ENCODE measurements at regions of chr4 and their contacts with region 1.

Region 1: DNA sequence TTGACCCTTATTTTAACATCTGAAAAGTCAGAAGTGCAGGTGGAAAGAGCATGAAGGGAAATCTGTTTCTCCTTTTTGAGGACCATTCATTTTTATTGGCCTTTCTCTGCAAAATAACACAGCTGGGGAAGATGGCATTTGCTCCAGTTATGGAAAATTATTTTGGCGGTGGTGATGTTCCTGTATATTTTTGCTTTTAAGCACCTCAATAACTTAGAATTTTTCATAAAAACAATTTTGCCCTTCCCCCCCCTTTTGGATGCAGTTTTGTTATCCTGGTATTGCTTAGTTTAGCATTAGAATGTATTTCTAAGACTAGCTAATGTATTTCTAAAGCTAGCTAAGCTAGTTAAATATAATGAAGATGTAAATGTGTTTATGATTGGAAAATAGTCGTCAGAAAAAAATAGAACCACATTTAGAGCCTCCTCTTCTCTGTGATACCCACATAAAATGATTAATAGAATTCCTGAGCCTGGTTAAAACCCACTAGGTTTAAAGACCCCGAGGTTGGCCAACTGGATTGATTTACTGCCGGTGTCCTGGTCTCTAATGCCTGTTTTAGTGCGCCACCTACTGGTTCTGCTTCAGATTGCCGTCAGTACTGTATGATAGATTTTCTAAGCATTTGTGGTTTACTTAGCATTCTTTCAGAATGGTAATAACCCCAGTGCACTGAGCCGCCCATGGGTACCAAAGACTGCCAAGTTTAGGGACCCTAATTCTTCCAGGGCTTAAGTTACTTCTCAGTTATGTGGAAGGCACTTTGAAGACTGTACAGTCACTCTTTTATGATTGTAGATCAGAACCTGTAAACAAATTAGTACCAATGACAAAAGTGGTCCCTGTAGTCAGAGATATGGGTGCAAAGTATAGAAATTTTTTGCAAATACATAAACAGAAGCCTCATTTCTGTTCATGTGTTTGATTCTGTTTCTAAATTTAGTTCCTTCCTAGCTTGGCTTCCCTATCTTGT is 11.4 kb downstream of the KLF3 start:
- DNase-seq: peak; percentile 66 to 93 (median 80)
- ATAC-seq: peak; percentile 57
- H3K4me3 ChIP-seq: no peak overlapping the region
- H3K4me3 Mint-ChIP-seq: peak overlapping the region; percentile 85
- H3K27ac ChIP-seq: peak overlapping the region in 1 of 2 donors; percentile 51
- H3K27ac Mint-ChIP-seq: peak overlapping the region; percentile 81
- H3K4me1 ChIP-seq: peaks cover 72% of the 10 kb centered on the region
- H3K4me1 Mint-ChIP-seq: peaks cover 89% of the 10 kb centered on the region
- H3K27me3 ChIP-seq: no peaks in the 10 kb centered on the region
- H3K27me3 Mint-ChIP-seq: no peaks in the 10 kb centered on the region
- CTCF ChIP-seq: peak; percentile 96

Region 2: GRCh38 chr4:38069271-38069760 is 606.1 kb before region 1 on chr4:
- CTCF ChIA-PET with region 1: interaction called, 7 read pairs
- POLR2A ChIA-PET with region 1: no interaction called
- intact Hi-C with region 1: loop called in 1 of 2 experiments (anchors 2 kb)
- DNase-seq: peak in 12 of 14 experiments; percentile 11 to 70 (median 40)
- ATAC-seq: peak; percentile 84
- H3K4me3 ChIP-seq: no peak overlapping the region
- H3K4me3 Mint-ChIP-seq: no peak overlapping the region
- H3K27ac ChIP-seq: no peak overlapping the region
- H3K27ac Mint-ChIP-seq: no peak overlapping the region
- H3K4me1 ChIP-seq: no peaks in the 10 kb centered on the region
- H3K4me1 Mint-ChIP-seq: peaks cover 13% of the 10 kb centered on the region
- H3K27me3 ChIP-seq: no peaks in the 10 kb centered on the region
- H3K27me3 Mint-ChIP-seq: no peaks in the 10 kb centered on the region
- CTCF ChIP-seq: peak; percentile 59

Region 3: GRCh38 chr4:38328989-38329729 is 346.3 kb before region 1 on chr4:
- CTCF ChIA-PET with region 1: interaction called, 3 read pairs
- POLR2A ChIA-PET with region 1: interaction called, 7 read pairs
- intact Hi-C with region 1: loop called in 1 of 2 experiments (anchors 2 kb)
- DNase-seq: peak in 6 of 14 experiments; percentile 20 to 66 (median 48)
- ATAC-seq: peak; percentile 86
- H3K4me3 ChIP-seq: no peak overlapping the region
- H3K4me3 Mint-ChIP-seq: peak overlapping the region; percentile 43
- H3K27ac ChIP-seq: peak overlapping the region in 1 of 2 donors; percentile 32
- H3K27ac Mint-ChIP-seq: peak overlapping the region; percentile 88
- H3K4me1 ChIP-seq: peaks cover 65% of the 10 kb centered on the region
- H3K4me1 Mint-ChIP-seq: peaks cover 77% of the 10 kb centered on the region
- H3K27me3 ChIP-seq: no peaks in the 10 kb centered on the region
- H3K27me3 Mint-ChIP-seq: no peaks in the 10 kb centered on the region
- CTCF ChIP-seq: no peak

Region 4: DNA sequence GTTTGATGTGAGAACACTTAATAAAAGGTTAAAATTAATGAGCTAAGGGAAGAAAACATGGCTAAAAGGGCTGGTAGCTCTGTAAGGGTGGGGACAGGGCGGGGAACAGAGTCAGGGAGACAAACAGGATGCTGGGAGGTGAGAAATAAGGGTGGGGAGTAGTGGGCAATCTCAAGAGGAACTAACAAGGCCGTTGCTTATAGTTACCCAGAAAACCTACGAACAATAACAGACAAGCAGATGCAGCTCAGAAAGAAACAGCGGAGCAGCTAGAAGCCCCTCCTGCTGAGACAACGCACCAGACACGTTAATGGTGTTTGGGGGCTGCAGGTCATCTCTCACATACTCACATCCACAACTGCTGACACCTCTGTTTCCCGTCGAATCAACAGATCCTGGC is 21.2 kb before region 1 on chr4:
- CTCF ChIA-PET with region 1: interaction called, 3 read pairs
- POLR2A ChIA-PET with region 1: interaction called, 12 read pairs
- intact Hi-C with region 1: no loop called
- DNase-seq: peak in 11 of 14 experiments; percentile 32 to 91 (median 48)
- ATAC-seq: peak; percentile 68
- H3K4me3 ChIP-seq: peak overlapping the region; percentile 36
- H3K4me3 Mint-ChIP-seq: peak overlapping the region; percentile 85
- H3K27ac ChIP-seq: peak overlapping the region; percentile 80 to 92
- H3K27ac Mint-ChIP-seq: peak overlapping the region; percentile 98
- H3K4me1 ChIP-seq: peaks cover 35% of the 10 kb centered on the region
- H3K4me1 Mint-ChIP-seq: peaks cover 55% of the 10 kb centered on the region
- H3K27me3 ChIP-seq: no peaks in the 10 kb centered on the region
- H3K27me3 Mint-ChIP-seq: no peaks in the 10 kb centered on the region
- CTCF ChIP-seq: no peak

Region 5: DNA sequence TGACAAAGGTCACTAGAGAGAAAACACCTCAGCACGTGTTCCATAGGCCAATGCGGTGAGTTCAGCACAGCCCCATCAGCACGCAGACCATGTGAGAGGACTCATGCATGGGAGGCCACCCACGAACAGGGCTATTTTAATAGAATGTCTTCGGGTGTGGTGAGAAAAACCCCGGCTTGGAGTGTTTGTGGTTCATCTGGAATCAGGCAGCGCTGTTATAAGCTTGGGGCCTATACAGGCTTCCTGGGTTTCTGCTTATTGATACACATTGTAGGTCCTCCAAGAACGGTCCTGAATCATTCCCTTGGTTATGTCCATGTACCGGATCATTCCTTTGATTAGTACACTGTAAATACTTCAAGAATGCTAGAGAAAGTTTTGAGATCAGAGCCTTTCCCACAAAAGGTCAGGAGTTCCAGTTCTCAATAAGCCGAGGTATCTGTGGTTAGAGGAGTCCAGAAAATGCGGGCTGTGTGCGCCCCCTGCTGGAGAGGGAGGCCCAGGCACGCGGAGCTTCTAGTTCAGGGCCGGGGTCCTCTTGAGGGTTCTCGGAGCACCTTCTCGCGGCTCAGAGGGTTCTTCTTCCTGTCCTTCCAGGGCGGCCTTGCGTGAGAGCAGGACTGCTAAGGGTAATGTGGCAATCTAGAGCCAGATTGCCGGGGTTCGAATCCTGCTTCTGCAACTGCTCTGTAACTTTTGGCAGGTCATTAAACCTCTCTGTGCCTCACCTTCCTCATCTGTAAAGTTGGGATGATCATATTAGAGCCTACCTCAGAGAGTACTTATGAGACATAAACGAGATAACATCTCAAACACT is 55.6 kb after region 1 on chr4:
- CTCF ChIA-PET with region 1: interaction called, 7 read pairs
- POLR2A ChIA-PET with region 1: no interaction called
- intact Hi-C with region 1: loop called in 1 of 2 experiments (anchors 2 kb)
- DNase-seq: peak; percentile 67 to 92 (median 80)
- ATAC-seq: peak; percentile 79
- H3K4me3 ChIP-seq: no peak overlapping the region
- H3K4me3 Mint-ChIP-seq: no peak overlapping the region
- H3K27ac ChIP-seq: no peak overlapping the region
- H3K27ac Mint-ChIP-seq: no peak overlapping the region
- H3K4me1 ChIP-seq: peaks cover 18% of the 10 kb centered on the region
- H3K4me1 Mint-ChIP-seq: peaks cover 20% of the 10 kb centered on the region
- H3K27me3 ChIP-seq: no peaks in the 10 kb centered on the region
- H3K27me3 Mint-ChIP-seq: no peaks in the 10 kb centered on the region
- CTCF ChIP-seq: peak; percentile 99

Measured in CD4-positive, alpha-beta T cell (primary cell).